ENCODE measurements at regions of chrX and their contacts with region 1.

Region 1: GRCh38 chrX:134520860-134521390 is 61.0 kb downstream of the HPRT1 start:
- DNase-seq: no peak
- ATAC-seq: no peak
- H3K4me3 Mint-ChIP-seq: no peak overlapping the region
- H3K27ac Mint-ChIP-seq: no peak overlapping the region
- H3K4me1 Mint-ChIP-seq: peaks cover 7% of the 10 kb centered on the region
- H3K27me3 Mint-ChIP-seq: no peaks in the 10 kb centered on the region

Region 2: GRCh38 chrX:133574716-133575115 is 946.2 kb before region 1 on chrX:
- CTCF ChIA-PET with region 1: no interaction called
- DNase-seq: no peak
- ATAC-seq: no peak
- H3K4me3 Mint-ChIP-seq: no peak overlapping the region
- H3K27ac Mint-ChIP-seq: no peak overlapping the region
- H3K4me1 Mint-ChIP-seq: no peaks in the 10 kb centered on the region
- H3K27me3 Mint-ChIP-seq: no peaks in the 10 kb centered on the region

Region 3: DNA sequence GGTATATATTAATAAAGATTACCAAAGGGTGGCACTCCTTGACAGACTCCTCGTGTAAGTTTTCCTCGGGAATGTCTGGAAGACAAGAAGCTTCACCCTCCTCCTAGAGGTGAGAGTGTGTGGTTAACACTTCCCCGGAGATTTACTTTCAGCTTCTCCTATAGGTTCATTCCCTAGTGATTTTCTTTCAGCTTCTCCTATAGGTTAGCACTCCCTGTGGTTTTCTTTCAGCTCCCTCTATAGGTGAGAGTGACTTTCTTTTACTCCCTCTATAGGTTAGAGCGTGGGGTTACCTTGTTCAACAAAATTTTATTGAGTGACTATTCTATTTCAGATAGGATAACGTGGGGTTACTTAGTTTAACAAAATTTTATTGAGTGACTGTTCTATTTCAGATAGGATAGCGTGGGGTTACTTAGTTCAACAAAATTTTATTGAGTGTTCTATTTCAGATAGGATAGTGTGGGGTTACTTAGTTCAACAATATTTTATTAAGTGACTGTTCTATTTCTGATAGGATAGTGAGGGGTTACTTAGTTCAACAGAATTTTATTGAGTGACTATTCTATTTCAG is 243.4 kb after region 1 on chrX:
- CTCF ChIA-PET with region 1: interaction called, 11 read pairs
- DNase-seq: no peak
- ATAC-seq: peak; percentile 78
- H3K4me3 Mint-ChIP-seq: no peak overlapping the region
- H3K27ac Mint-ChIP-seq: no peak overlapping the region
- H3K4me1 Mint-ChIP-seq: peaks cover 2% of the 10 kb centered on the region
- H3K27me3 Mint-ChIP-seq: no peaks in the 10 kb centered on the region